ENCODE measurements at regions of chr11 and their contacts with region 1.

Region 1: DNA sequence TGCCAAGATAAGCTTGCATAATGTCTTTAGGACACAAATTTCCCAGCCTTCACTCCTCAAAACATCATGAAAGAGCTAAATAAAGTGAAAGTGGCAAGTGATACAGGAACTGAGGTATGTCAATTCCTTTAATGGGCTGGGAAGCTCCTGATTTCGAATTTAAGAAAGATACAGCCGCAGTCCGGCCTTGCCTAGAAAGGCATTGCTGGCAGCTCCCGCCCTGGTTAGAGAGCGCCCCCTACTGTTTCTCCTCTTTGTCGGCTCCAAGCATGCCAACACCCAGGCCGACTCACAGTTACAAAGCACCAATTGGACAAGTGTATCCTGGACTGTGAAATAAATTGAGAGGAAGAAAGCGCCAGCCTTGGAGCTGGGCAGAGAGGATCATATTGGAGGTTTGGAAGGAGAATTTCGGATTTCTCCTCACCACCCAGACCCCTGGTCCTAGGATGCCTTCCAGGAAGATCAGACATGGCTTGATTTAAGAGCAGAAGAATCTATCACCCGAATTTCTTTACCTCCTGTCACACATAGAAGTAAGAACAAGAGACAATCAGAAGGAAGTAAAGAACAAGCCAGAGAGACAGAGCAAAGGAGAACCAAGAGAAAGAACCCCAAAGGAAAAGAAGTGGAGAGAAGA is 84.0 kb downstream of the FAM76B start:
- DNase-seq: peak; percentile 94
- H3K4me3 ChIP-seq: no peak overlapping the region
- H3K27ac ChIP-seq: peak overlapping the region; percentile 37 to 69 (median 48)
- H3K4me1 ChIP-seq: peaks cover 0 to 41% (median 35%) of the 10 kb centered on the region in 4 donors
- H3K27me3 ChIP-seq: no peaks in the 10 kb centered on the region
- CTCF ChIP-seq: peak; percentile 86 to 91 (median 88)
- EP300 ChIP-seq: no peak
- POLR2A ChIP-seq: no peak

Region 2: GRCh38 chr11:95222817-95223216 is 482.8 kb before region 1 on chr11:
- intact Hi-C with region 1: no loop called
- DNase-seq: no peak
- H3K4me3 ChIP-seq: no peak overlapping the region
- H3K27ac ChIP-seq: no peak overlapping the region
- H3K4me1 ChIP-seq: no peaks in the 10 kb centered on the region
- H3K27me3 ChIP-seq: no peaks in the 10 kb centered on the region
- CTCF ChIP-seq: no peak
- EP300 ChIP-seq: no peak
- POLR2A ChIP-seq: no peak

Region 3: DNA sequence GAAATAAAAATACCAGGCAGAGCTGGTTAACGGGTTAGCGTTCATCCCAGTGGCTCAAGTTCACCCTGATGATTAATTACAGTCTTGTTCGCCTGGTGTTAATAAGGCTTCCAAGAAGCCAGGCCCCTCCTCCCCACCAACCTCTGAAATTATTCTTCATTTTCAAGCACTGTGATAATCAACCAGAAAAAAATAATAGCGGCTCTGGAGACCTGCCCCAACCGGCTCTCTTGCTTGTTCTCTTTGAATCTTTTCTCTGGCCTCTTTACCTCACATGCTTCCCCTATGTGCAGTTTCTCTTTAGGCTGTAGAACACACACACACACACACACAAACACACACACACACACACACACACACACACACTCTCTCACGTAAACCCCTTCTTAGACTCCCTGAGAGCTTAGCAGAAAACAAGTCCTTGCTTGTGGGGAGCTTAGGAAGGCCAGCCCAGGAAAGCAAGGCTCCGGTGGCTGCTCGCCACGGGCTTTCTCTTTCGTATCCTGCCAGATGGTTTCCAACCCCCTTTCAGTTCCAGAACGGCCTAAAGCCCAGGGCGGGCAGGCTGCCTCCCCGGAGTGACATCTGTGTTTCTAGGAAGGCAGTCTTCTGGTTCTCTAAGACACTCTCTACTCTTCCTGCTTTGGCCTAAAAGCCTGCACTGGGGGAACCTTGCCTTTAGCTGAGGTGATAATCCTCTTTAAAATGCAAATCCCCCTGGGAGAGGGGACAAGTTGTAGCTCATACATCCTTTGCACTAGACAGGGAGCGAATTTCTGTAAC is 368.2 kb before region 1 on chr11:
- intact Hi-C with region 1: loop called (anchors 2 kb)
- DNase-seq: peak; percentile 79
- H3K4me3 ChIP-seq: peak overlapping the region in 2 of 4 donors; percentile 9 to 18
- H3K27ac ChIP-seq: peak overlapping the region; percentile 74 to 87 (median 84)
- H3K4me1 ChIP-seq: peaks cover 0 to 48% (median 38%) of the 10 kb centered on the region in 4 donors
- H3K27me3 ChIP-seq: no peaks in the 10 kb centered on the region
- CTCF ChIP-seq: no peak
- EP300 ChIP-seq: no peak
- POLR2A ChIP-seq: no peak

Region 4: DNA sequence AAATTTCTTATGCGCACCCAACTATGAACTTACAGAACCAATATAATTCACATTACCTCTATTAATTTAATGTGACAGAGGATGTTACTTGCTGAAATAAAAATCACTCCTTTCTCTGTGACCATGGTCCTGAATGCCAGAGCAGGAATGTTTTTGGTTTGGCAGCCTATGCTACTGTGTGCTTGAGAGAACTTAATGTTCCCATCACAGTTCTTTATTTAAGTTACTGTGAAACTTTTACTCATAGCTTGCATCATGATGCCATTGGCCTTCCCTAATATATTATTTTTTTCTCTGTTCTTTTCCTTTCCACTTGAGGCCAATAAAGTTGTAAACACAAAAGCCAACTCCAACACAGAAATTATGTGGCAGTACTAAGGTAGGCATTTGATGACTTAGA is 58.2 kb before region 1 on chr11:
- intact Hi-C with region 1: loop called (anchors 2 kb)
- DNase-seq: peak; percentile 78
- H3K4me3 ChIP-seq: peak overlapping the region in 1 of 4 donors; percentile 14
- H3K27ac ChIP-seq: peak overlapping the region; percentile 76 to 83 (median 80)
- H3K4me1 ChIP-seq: peaks cover 0 to 26% (median 19%) of the 10 kb centered on the region in 4 donors
- H3K27me3 ChIP-seq: no peaks in the 10 kb centered on the region
- CTCF ChIP-seq: no peak
- EP300 ChIP-seq: peak; percentile 76 to 96 (median 92)
- POLR2A ChIP-seq: no peak

Region 5: GRCh38 chr11:95764267-95764898 is 58.8 kb after region 1 on chr11:
- intact Hi-C with region 1: loop called (anchors 5 kb)
- DNase-seq: no peak
- H3K4me3 ChIP-seq: no peak overlapping the region
- H3K27ac ChIP-seq: no peak overlapping the region
- H3K4me1 ChIP-seq: no peaks in the 10 kb centered on the region
- H3K27me3 ChIP-seq: no peaks in the 10 kb centered on the region
- CTCF ChIP-seq: peak; percentile 59 to 69 (median 60)
- EP300 ChIP-seq: no peak
- POLR2A ChIP-seq: no peak

Region 6: DNA sequence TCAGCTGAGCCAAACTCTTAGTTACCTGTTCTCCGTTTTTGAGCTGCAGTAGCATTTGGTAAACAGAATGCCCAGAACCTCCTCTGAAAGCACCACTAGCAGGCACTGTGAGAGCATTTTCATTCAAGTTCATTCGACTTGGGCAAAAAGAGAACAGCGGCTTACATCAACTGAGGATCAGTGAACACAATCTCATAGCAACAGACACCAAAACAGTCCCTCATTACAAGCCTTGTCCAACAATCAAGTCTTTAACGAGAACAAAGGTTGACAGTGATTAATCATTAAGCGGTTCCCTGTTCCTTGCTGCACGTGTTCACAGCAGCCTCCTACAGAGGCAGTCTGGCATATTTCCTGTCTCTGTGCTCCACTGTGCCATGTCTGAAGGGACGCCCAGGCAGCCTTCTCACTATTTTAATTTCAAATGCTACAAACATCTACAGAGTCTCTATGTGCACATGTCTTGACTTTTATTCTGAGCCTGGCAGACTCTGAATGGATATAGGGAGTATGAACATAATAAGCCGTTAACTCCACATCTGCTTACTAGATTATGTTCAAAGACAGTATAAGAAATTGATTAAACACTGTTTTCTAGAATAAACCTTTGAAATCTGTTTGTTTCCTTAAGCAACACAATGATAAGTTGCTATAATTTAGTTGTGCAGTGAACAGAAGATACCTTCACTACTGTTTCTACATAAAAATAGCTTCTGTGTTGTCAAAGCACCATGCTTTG is 306.6 kb after region 1 on chr11:
- intact Hi-C with region 1: no loop called
- DNase-seq: peak; percentile 72
- H3K4me3 ChIP-seq: no peak overlapping the region
- H3K27ac ChIP-seq: peak overlapping the region in 2 of 4 donors; percentile 41 to 55
- H3K4me1 ChIP-seq: peaks cover 0 to 20% (median 11%) of the 10 kb centered on the region in 4 donors
- H3K27me3 ChIP-seq: no peaks in the 10 kb centered on the region
- CTCF ChIP-seq: peak in 3 of 4 experiments; percentile 19 to 36 (median 31)
- EP300 ChIP-seq: peak in 1 of 4 donors; percentile 4
- POLR2A ChIP-seq: no peak